ENCODE measurements at regions of chr7 and their contacts with region 1.

Region 1: DNA sequence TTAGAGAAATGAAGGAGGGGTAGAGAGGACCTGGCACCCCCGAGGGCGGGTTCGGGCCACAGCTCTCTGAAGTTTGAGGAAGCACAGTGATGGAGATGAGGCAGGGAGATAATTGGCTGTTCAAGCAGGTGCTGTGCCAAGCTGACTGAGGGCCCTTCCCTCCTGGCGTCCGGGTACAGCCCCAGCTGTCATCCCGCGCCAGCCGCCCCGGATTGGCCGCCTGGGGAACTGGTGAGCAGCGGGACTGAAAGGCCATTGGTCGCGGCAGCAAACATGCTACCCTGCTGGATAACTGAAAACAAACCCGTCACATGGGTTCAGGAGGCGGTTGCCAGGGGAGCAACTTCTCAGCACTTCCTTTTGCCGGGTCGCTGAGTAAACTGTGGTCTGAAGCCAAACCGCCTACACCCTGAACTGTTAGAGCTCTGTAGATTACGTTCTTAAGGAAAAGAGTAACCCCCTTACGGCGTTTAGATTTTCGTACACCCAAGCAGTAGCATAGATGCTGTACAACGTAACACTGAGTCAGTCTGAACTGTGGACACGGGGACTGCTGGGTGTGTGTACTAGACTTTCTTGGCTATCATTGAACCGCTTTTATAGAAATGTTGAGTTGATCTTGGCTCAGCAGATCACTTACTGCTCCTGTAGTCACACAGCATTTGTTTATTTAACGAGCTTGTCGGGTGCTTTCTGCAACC is 1.3 kb downstream of the INSIG1 start:
- DNase-seq: peak; percentile 81
- H3K4me3 ChIP-seq: peak overlapping the region; percentile 54
- H3K27me3 ChIP-seq: no peaks in the 10 kb centered on the region
- CTCF ChIP-seq: peak; percentile 6; the same call in 1 of the 2 replicates

Region 2: DNA sequence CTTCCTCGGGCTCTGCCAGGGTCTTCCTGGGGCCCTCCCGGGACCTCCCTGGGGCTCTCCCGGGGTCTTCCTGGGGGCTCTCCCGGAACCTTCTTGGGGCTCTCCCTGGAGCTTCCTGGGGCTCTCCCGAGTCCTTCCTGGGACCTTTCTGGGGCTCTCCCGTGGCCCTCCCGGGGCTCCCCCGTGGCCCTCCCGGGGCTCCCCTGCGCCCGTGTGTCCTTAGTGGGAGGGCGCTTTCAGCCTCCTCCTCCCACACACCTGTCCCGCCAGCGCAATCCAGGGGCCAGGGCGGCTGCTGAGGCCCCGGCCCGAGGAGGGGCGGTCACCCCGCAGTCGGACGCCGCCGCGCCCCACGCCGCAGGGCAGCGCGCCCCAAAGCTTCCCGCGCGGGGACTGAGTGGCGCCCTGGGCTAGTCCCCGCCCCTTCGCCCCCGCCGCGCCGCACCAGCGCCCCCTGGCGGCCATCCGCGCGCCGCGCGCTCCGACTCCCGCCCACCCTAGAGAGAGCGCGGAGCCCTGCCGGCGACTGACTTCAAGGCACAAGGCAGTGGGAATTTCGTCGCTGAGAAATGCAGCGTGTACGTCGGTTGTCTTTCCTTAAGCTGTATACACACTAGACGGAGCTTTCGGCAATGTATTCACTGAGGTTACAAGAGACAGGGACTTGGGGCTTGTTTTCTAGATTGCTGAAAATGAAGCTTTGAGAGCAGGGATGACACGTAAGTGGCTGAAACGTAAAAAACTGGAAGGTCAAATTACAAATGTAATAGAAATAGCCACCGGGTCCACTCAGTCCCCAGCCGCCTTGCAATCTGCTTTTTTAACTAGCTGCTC is 45.8 kb after region 1 on chr7:
- CTCF ChIA-PET with region 1: interaction called, 18 read pairs
- POLR2A ChIA-PET with region 1: no interaction called
- DNase-seq: no peak
- H3K4me3 ChIP-seq: peak overlapping the region; percentile 25
- H3K27me3 ChIP-seq: peaks cover 3% of the 10 kb centered on the region; the same call in 1 of the 2 replicates
- CTCF ChIP-seq: peak; percentile 64